GM12878 (cell line): ENCODE measurements at regions of chr12 and their contacts with region 1.

Region 1: DNA sequence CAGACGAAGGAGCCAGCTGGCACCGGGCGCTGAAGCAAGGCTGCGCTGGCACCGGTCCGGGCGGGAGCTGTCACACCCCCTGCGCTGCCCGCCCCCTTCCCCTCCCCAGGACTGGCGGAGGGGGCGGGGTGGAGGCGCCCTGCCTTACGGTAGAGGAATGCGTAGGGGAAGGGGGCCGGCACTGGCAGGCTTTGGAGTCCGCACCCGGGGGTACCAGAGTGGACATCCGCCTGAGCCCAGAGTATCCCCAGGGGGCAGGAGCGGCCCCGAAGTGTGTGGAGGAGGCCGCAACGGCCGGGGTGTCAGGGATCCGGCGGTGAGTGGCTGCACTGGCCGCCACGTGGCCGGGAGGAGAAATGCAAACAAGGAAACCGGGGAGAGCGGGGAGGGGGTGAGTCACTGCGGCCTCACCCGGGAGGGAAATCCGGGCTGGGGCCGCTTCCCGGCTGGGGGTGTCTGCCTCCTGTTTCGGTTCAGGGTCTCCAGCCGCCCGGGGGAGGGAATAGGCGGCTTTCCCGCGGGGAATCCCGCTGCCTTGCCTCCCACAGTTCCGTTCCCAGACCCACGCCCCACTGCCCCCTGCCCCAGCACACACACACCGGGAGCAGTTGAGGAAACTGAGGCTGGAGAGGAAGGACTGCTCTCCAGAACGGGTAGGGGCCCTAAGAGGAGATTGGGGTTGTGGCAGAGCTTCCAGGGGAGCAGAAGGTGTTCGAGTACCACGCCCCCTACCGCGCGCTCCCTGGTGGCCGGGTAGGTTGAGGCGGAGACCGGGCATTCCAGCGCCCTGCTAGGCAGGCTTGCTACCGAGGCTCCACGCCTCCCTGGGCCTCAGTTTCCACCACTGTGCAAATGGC is at the start of gene RAPGEF3:
- DNase-seq: no peak
- ATAC-seq: peak; percentile 68
- H3K4me3 ChIP-seq: peak within 1 kb of the TSS; percentile 66
- H3K27ac ChIP-seq: no peak within 1 kb of the TSS
- H3K4me1 ChIP-seq: peaks cover 37% of the 10 kb centered on the region
- H3K27me3 ChIP-seq: no peaks in the 10 kb centered on the region
- CTCF ChIP-seq: peak; percentile 36 to 68 (median 51); a peak in 5 of 6 replicates
- EP300 ChIP-seq: no peak
- POLR2A ChIP-seq: peak; percentile 21; the same call in 1 of the 2 replicates
- RAD21 ChIP-seq: no peak
- polyA plus RNA-seq, gene RAPGEF3: 0.02 TPM in 1 of 2 experiments, not detected in the other

Region 2: DNA sequence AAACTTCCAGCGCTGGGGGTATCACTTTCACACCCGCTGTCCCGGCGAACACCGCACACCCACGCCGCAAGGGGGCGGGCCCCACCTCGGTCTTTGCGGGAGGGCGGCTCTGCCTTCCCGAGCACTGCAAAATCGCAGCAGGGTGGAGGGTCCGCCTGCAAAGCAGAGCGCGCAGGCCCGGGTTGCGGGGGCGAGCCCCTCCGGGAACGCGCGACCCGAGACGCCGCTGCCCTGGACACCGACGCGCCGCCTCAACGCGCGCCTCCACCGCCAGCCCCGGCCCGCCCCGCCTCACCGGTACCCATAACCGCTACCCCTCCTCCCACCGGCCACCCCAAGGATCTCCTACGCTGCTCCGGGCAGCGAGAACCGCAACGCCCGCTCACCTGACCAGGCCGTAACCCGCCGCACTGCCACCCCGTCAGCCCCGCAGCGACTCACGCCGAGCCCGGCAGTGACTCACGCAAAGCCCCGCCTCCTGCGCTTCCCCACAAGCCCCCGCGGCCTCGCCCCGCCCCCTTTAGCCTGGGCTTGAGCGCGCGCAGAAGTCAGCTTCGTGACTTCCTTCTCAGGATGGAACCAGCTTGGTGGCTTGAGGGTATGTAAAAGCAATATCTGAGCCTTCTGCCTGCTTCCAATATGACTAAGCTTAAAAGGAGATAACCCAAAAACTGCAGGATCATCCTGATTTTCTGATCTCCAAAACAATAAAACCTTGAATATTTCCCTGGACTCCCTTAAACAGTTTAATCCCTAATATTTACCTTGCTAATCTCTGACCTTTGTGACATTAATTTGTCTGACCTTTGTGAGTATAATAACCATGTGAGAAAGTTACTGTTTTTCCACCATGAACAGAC is 53.3 kb before region 1 on chr12 and contains the start of gene RPAP3:
- CTCF ChIA-PET with region 1: interaction called, 22 read pairs
- POLR2A ChIA-PET with region 1: interaction called, 4 read pairs
- RAD21 ChIA-PET with region 1: interaction called, 5 read pairs
- SMC1A ChIA-PET with region 1: interaction called, 5 read pairs
- in situ Hi-C with region 1: no loop called
- intact Hi-C with region 1: no loop called
- DNase-seq: peak; percentile 65
- ATAC-seq: peak; percentile 94
- H3K4me3 ChIP-seq: peak within 1 kb of the TSS; percentile 84
- H3K27ac ChIP-seq: peak within 1 kb of the TSS; percentile 85
- H3K4me1 ChIP-seq: peaks cover 32% of the 10 kb centered on the region
- H3K27me3 ChIP-seq: no peaks in the 10 kb centered on the region
- CTCF ChIP-seq: peak; percentile 38 to 60 (median 48); a peak in 4 of 6 replicates
- EP300 ChIP-seq: no peak
- POLR2A ChIP-seq: peak; percentile 98
- RAD21 ChIP-seq: no peak
- polyA plus RNA-seq, gene RPAP3: 14.1 to 24.5 TPM

Region 3: GRCh38 chr12:47773062-47773857 is 14.2 kb after region 1 on chr12 and contains the start of gene SLC48A1:
- CTCF ChIA-PET with region 1: interaction called, 166 read pairs
- POLR2A ChIA-PET with region 1: interaction called, 6 read pairs
- RAD21 ChIA-PET with region 1: interaction called, 83 read pairs
- SMC1A ChIA-PET with region 1: interaction called, 97 read pairs
- in situ Hi-C with region 1: no loop called
- intact Hi-C with region 1: no loop called
- DNase-seq: no peak
- ATAC-seq: peak; percentile 93
- H3K4me3 ChIP-seq: peak within 1 kb of the TSS; percentile 80
- H3K27ac ChIP-seq: no peak within 1 kb of the TSS
- H3K4me1 ChIP-seq: peaks cover 17% of the 10 kb centered on the region; the same call in 1 of the 2 replicates
- H3K27me3 ChIP-seq: no peaks in the 10 kb centered on the region
- CTCF ChIP-seq: peak; percentile 16 to 47 (median 24); a peak in 4 of 6 replicates
- EP300 ChIP-seq: no peak
- POLR2A ChIP-seq: peak; percentile 62
- RAD21 ChIP-seq: no peak
- polyA plus RNA-seq, gene SLC48A1: 1.1 to 2.2 TPM

Region 4: DNA sequence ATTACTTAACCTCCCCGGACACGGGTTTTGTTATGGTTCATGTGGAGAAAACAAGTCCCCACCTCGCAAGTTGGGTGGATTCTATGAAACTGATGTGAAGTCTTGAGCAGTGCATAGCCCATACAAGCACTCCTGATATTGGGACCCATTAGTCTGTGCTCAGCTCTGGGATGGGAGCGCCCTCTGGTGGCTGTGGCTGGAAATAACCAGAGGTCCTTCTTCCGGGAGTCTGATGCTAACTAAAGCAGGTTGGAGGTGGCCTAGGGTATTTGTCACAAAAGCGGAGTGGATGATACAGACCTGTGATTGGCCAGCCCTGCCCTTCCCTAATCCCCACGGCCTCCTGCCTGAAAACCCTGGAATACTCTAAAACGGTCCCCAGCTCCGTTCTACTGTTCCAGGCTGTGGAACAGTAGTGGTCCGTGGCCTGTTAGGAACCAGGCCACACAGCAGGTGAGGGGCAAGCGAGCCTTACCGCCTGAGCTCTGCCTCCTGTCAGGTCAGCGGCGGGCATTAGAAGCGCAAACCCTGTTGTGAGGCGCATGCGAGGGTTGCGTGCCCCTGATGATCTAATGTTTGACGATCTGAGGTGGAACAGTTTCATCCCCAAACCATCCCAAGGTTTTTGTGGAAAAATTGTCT is 20.4 kb after region 1 on chr12:
- CTCF ChIA-PET with region 1: interaction called, 18 read pairs
- POLR2A ChIA-PET with region 1: interaction called, 6 read pairs
- RAD21 ChIA-PET with region 1: interaction called, 10 read pairs
- SMC1A ChIA-PET with region 1: interaction called, 12 read pairs
- in situ Hi-C with region 1: no loop called
- intact Hi-C with region 1: no loop called
- DNase-seq: peak; percentile 53
- ATAC-seq: peak; percentile 95
- H3K4me3 ChIP-seq: no peak overlapping the region
- H3K27ac ChIP-seq: no peak overlapping the region
- H3K4me1 ChIP-seq: peaks cover 11% of the 10 kb centered on the region; the same call in 1 of the 2 replicates
- H3K27me3 ChIP-seq: no peaks in the 10 kb centered on the region
- CTCF ChIP-seq: peak; percentile 92 to 97 (median 95)
- EP300 ChIP-seq: no peak
- POLR2A ChIP-seq: no peak; the same call in none of the 2 replicates
- RAD21 ChIP-seq: peak; percentile 95

Region 5: DNA sequence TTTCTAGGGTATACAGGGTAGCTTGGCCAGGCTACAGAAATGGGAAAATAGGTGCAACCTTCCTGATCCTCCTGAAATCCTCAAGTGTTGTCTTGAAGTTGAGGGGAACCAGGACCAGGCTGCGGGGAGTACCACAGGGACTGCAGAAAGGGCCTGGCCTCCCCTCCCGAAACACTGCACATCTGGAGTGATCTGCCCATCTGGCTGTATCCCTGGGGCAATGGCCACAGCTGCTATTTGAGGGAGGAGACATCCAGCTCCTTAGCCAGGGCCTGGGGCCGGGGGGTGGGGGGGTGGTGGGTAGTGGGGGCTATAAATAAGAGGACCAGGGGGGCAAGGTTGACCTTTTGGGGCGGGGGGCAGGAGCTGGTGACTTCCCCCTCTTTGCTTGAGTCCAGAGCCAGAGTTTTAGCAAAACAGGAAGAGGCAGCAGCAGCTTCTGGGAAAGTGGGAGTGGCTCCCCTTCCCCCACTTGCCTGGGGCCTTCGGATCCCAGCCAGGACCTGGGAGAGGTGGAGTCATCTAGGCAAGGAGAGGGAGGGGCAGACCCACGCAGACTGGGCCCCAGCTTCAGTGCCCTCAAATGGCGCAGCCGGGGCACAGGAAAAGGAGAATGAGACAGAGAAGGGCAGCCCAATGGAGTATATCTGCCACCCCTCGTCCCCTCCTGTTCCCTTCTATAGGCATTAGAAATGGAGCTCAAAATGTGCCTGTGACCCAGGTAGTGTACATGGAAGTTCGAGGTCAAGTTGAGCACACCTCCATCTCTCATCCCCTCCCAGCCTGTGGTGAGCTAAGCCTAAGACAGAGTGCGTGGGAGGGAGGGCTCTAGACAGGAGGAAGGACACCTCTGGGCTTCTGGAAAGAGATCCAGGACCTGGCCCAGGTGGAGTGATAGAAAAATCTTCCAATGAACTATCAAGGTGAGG is 69.8 kb after region 1 on chr12:
- CTCF ChIA-PET with region 1: interaction called, 3 read pairs
- POLR2A ChIA-PET with region 1: interaction called, 3 read pairs
- RAD21 ChIA-PET with region 1: interaction called, 12 read pairs
- SMC1A ChIA-PET with region 1: no interaction called
- in situ Hi-C with region 1: no loop called
- intact Hi-C with region 1: no loop called
- DNase-seq: no peak
- ATAC-seq: no peak
- H3K4me3 ChIP-seq: no peak overlapping the region
- H3K27ac ChIP-seq: no peak overlapping the region
- H3K4me1 ChIP-seq: peaks cover 42% of the 10 kb centered on the region
- H3K27me3 ChIP-seq: no peaks in the 10 kb centered on the region; a peak in 1 of 4 replicates
- CTCF ChIP-seq: no peak
- EP300 ChIP-seq: no peak
- POLR2A ChIP-seq: no peak
- RAD21 ChIP-seq: no peak